ENCODE measurements at regions of chr21 and their contacts with region 1.

Region 1: GRCh38 chr21:44338971-44339910 is at the start of gene CFAP410:
- DNase-seq: peak; percentile 97
- ATAC-seq: peak; percentile 97
- H3K4me3 Mint-ChIP-seq: peak within 1 kb of the TSS; percentile 96
- H3K27ac Mint-ChIP-seq: peak within 1 kb of the TSS; percentile 98
- H3K4me1 Mint-ChIP-seq: peaks cover 18% of the 10 kb centered on the region
- H3K27me3 Mint-ChIP-seq: no peaks in the 10 kb centered on the region
- total RNA-seq, gene CFAP410: 7.3 to 11.4 TPM

Region 2: GRCh38 chr21:44299458-44300261 is 39.6 kb before region 1 on chr21 and contains the start of gene PFKL:
- CTCF ChIA-PET with region 1: interaction called, 4 read pairs
- POLR2A ChIA-PET with region 1: no interaction called
- intact Hi-C with region 1: loop called in 1 of 2 experiments (anchors 1 kb)
- DNase-seq: peak; percentile 82
- ATAC-seq: peak; percentile 63
- H3K4me3 Mint-ChIP-seq: peak within 1 kb of the TSS; percentile 85
- H3K27ac Mint-ChIP-seq: peak within 1 kb of the TSS; percentile 96
- H3K4me1 Mint-ChIP-seq: peaks cover 51% of the 10 kb centered on the region
- H3K27me3 Mint-ChIP-seq: no peaks in the 10 kb centered on the region
- total RNA-seq, gene PFKL: 167 to 202 TPM

Region 3: DNA sequence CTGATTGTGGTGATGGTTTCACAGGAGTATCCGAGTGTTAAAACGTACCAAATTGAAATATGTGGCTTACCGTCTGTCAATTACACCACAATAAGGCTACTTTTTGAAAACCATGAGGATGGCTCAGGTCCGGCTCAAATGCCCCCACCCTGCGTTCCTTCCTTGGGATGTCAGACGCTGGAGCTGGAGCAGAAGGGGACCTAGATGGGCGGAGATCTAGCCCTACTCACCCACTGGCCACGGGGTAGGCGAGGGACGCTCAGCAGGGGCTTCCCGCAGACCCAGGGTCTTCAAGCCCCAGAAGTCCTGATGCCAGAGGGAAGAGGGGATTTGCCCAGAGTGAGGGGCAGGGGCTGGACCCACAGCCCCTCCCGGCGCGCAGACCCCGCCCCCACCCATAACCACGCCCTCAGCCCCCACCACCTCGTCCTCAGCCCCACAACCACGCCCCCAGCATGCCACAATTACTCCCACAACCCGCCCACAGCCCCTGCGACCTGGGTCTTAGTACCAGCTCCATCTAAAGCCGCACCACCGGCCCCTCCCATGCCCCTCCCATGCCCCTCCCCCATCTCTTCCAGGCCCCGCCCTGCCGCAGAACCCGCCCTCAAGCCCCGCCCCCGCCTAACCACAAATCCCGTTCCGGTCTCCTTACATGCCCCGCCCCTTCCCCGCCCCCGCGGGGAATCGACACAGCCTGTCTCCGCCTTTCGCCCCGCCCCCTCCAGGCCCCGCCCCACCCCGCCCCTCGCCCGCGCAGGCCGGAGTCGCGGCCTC is 115.7 kb after region 1 on chr21 and contains the start of gene LRRC3:
- CTCF ChIA-PET with region 1: interaction called, 3 read pairs
- POLR2A ChIA-PET with region 1: no interaction called
- intact Hi-C with region 1: loop called in 1 of 2 experiments (anchors 1 kb)
- DNase-seq: peak; percentile 95
- ATAC-seq: peak; percentile 74
- H3K4me3 Mint-ChIP-seq: peak within 1 kb of the TSS; percentile 67
- H3K27ac Mint-ChIP-seq: no peak within 1 kb of the TSS
- H3K4me1 Mint-ChIP-seq: no peaks in the 10 kb centered on the region
- H3K27me3 Mint-ChIP-seq: peaks cover 15% of the 10 kb centered on the region
- total RNA-seq, gene LRRC3: 2.7 to 2.9 TPM

Region 4: GRCh38 chr21:44801468-44802395 is 462.5 kb after region 1 on chr21 and contains the start of gene UBE2G2:
- CTCF ChIA-PET with region 1: no interaction called
- POLR2A ChIA-PET with region 1: no interaction called
- intact Hi-C with region 1: loop called in 1 of 2 experiments (anchors 1 kb)
- DNase-seq: peak; percentile 92
- ATAC-seq: peak; percentile 95
- H3K4me3 Mint-ChIP-seq: peak within 1 kb of the TSS; percentile 94
- H3K27ac Mint-ChIP-seq: peak within 1 kb of the TSS; percentile 90
- H3K4me1 Mint-ChIP-seq: peaks cover 54% of the 10 kb centered on the region
- H3K27me3 Mint-ChIP-seq: no peaks in the 10 kb centered on the region
- total RNA-seq, gene UBE2G2: 103 to 121 TPM